ENCODE measurements at regions of chr9 and their contacts with region 1.

Region 1: GRCh38 chr9:120892748-120893610 is 16.0 kb upstream of the PHF19 start:
- DNase-seq: peak; percentile 79
- ATAC-seq: peak; percentile 88
- H3K4me3 ChIP-seq: peak overlapping the region in 1 of 5 experiments; percentile 13
- H3K4me3 Mint-ChIP-seq: peak overlapping the region; percentile 71
- H3K27ac ChIP-seq: peak overlapping the region; percentile 51 to 65
- H3K27ac Mint-ChIP-seq: peak overlapping the region; percentile 79
- H3K4me1 ChIP-seq: peaks cover 48 to 49% of the 10 kb centered on the region in 2 donors
- H3K4me1 Mint-ChIP-seq: peaks cover 50% of the 10 kb centered on the region
- H3K27me3 ChIP-seq: no peaks in the 10 kb centered on the region
- H3K27me3 Mint-ChIP-seq: no peaks in the 10 kb centered on the region
- CTCF ChIP-seq: no peak

Region 2: GRCh38 chr9:120875954-120876841 is 16.8 kb before region 1 on chr9:
- CTCF ChIA-PET with region 1: interaction called, 5 read pairs
- POLR2A ChIA-PET with region 1: interaction called, 9 read pairs
- intact Hi-C with region 1: loop called (anchors 1 kb)
- DNase-seq: peak; percentile 77
- ATAC-seq: peak; percentile 72
- H3K4me3 ChIP-seq: peak overlapping the region; percentile 45 to 83 (median 70)
- H3K4me3 Mint-ChIP-seq: peak overlapping the region; percentile 86
- H3K27ac ChIP-seq: peak overlapping the region; percentile 69 to 71
- H3K27ac Mint-ChIP-seq: peak overlapping the region; percentile 80
- H3K4me1 ChIP-seq: peaks cover 27 to 33% of the 10 kb centered on the region in 2 donors
- H3K4me1 Mint-ChIP-seq: peaks cover 39% of the 10 kb centered on the region
- H3K27me3 ChIP-seq: peaks cover 0 to 3% (median 0%) of the 10 kb centered on the region in 4 experiments
- H3K27me3 Mint-ChIP-seq: peaks cover 9% of the 10 kb centered on the region
- CTCF ChIP-seq: peak; percentile 15

Region 3: DNA sequence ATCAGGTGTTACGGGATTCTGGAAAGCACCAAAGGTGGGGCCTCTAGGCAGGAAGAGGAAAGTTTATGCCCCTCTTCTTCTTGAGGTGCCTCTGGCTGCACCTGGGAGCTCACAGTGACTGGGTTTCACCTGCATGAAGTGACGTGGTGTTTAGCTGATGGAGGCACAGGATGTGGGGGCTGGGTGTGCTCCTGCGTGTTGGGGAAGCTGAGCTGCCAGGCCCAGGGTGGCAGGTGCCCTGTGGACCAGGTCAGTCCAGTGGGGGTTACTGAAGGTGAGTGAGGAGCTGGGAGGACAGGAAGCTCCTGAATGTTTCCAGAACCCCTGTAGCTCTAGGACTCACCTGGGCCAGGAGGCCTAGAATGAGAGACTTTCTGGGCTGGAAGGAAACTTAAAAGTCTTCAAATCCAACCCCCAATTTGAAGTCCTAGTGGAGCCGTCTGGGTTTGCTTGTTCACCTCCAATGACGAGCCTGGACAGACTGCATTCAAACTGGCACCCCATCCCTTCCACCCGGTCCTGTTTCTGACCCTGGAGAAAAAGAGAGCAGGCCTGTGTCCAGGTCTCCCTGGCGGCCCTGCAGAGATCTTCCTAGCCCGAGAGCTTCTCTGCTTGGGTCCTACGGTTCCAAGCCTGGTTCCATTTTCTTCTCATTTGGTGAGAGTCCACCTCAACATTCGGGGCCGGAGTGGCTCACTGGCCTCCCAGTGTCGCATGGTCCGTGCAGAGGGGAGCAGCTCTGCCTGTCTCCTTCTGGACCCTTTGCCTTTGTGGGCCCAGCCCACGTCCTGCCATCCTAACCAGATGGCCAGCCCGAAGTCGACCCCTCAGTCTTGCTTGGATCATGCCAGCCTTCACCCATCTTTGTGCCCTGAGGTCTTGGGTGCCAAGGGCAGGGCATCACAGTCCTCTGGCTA is 11.3 kb after region 1 on chr9:
- CTCF ChIA-PET with region 1: interaction called, 12 read pairs
- POLR2A ChIA-PET with region 1: interaction called, 4 read pairs
- intact Hi-C with region 1: no loop called
- DNase-seq: peak; percentile 79
- ATAC-seq: peak; percentile 77
- H3K4me3 ChIP-seq: no peak overlapping the region
- H3K4me3 Mint-ChIP-seq: peak overlapping the region; percentile 48
- H3K27ac ChIP-seq: peak overlapping the region; percentile 76 to 77
- H3K27ac Mint-ChIP-seq: peak overlapping the region; percentile 76
- H3K4me1 ChIP-seq: peaks cover 53 to 57% of the 10 kb centered on the region in 2 donors
- H3K4me1 Mint-ChIP-seq: peaks cover 54% of the 10 kb centered on the region
- H3K27me3 ChIP-seq: no peaks in the 10 kb centered on the region
- H3K27me3 Mint-ChIP-seq: no peaks in the 10 kb centered on the region
- CTCF ChIP-seq: no peak

Region 4: DNA sequence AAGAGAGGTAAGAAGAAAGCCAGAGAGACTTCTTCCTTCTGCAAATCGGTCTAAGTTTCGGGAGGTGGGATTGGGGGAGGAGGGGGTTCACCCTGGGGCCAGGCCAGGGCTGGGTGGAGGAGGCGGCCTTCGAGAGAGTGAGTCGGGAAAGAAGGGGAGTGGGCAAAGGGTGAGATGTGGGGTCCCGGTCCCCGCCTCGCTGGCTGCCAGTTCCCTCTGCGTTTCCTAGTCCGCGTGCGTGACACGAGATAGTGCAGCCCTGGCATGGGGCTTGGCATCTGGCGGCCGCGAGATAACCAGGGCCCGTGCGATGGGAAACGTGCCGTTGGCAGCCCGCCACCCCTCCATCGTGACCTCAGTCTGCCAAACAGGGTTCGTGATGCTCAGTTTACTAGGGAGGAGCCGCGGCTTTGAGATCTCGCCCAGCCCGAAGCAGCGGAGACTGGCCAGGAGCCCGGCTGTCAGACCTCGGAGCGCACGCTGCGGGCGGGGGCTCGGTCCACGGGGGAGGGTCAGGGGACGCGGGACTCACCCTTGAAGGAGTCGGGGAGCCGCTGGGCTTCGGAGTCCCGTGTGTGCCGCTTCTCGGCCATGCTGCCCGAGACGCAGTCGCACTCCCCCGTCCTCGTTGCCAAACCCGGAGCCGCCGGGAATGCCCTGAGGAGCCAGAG is 476.8 kb after region 1 on chr9 and contains the start of gene STOM:
- CTCF ChIA-PET with region 1: no interaction called
- POLR2A ChIA-PET with region 1: no interaction called
- intact Hi-C with region 1: no loop called
- DNase-seq: no peak
- ATAC-seq: peak; percentile 56
- H3K4me3 ChIP-seq: peak within 1 kb of the TSS; percentile 58 to 93 (median 71)
- H3K4me3 Mint-ChIP-seq: peak within 1 kb of the TSS; percentile 91
- H3K27ac ChIP-seq: peak within 1 kb of the TSS; percentile 68 to 75
- H3K27ac Mint-ChIP-seq: peak within 1 kb of the TSS; percentile 91
- H3K4me1 ChIP-seq: peaks cover 19 to 20% of the 10 kb centered on the region in 2 donors
- H3K4me1 Mint-ChIP-seq: peaks cover 29% of the 10 kb centered on the region
- H3K27me3 ChIP-seq: no peaks in the 10 kb centered on the region
- H3K27me3 Mint-ChIP-seq: no peaks in the 10 kb centered on the region
- CTCF ChIP-seq: no peak
- total RNA-seq, gene STOM: 6.1 and 6.3 TPM in 2 replicates